Motor neuron (in vitro differentiated cells): ENCODE measurements at regions of chr20 and their contacts with region 1.

Region 1: GRCh38 chr20:41095110-41095969 is 42.0 kb upstream of the PLCG1 start:
- ATAC-seq: peak in 6 of 8 experiments; percentile 42 to 76 (median 60)
- H3K4me3 ChIP-seq: no peak overlapping the region
- H3K27ac ChIP-seq: no peak overlapping the region
- H3K4me1 ChIP-seq: no peaks in the 10 kb centered on the region

Region 2: GRCh38 chr20:40056166-40056565 is 1039.2 kb before region 1 on chr20:
- in situ Hi-C with region 1: no loop called
- ATAC-seq: no peak
- H3K4me3 ChIP-seq: no peak overlapping the region
- H3K27ac ChIP-seq: no peak overlapping the region
- H3K4me1 ChIP-seq: no peaks in the 10 kb centered on the region

Region 3: GRCh38 chr20:40970201-40970600 is 125.1 kb before region 1 on chr20:
- in situ Hi-C with region 1: loop called in 5 of 9 experiments (anchors 10 to 25 kb)
- ATAC-seq: no peak
- H3K4me3 ChIP-seq: no peak overlapping the region
- H3K27ac ChIP-seq: no peak overlapping the region
- H3K4me1 ChIP-seq: no peaks in the 10 kb centered on the region

Region 4: DNA sequence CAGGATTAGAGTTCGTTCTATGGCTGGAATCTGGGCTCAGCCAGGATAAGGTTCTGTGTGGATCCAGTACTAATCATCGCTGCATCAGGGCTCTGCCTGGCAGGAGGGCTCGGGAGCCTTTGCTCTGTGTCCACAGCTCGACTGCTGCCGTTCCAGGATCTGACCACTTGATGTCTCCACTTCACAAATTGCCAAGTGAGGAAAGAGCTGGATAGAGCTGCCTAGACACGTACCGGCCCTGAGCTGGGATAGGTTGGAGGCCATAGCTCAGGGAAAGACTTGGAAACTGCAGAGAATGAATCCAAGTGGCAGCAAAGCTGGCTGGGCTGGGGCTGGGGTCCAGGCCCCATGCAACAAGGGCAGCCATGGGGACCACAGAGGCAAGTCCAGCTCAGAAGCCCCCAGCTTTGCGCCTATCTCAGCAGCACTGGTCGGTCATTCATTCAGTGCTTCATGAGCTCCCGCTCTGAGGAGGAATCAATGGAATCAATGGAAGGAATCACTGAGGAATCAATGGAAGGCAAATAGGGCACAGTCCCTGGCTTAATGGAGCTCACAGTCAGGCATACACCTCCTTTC is 104.7 kb before region 1 on chr20:
- in situ Hi-C with region 1: loop called in 4 of 9 experiments (anchors 25 kb)
- ATAC-seq: peak; percentile 97 to 100 (median 100)
- H3K4me3 ChIP-seq: no peak overlapping the region
- H3K27ac ChIP-seq: no peak overlapping the region
- H3K4me1 ChIP-seq: peaks cover 0 to 2% of the 10 kb centered on the region in 2 donors